Natural killer cell (primary cell): ENCODE measurements at regions of chr14 and their contacts with region 1.

Region 1: DNA sequence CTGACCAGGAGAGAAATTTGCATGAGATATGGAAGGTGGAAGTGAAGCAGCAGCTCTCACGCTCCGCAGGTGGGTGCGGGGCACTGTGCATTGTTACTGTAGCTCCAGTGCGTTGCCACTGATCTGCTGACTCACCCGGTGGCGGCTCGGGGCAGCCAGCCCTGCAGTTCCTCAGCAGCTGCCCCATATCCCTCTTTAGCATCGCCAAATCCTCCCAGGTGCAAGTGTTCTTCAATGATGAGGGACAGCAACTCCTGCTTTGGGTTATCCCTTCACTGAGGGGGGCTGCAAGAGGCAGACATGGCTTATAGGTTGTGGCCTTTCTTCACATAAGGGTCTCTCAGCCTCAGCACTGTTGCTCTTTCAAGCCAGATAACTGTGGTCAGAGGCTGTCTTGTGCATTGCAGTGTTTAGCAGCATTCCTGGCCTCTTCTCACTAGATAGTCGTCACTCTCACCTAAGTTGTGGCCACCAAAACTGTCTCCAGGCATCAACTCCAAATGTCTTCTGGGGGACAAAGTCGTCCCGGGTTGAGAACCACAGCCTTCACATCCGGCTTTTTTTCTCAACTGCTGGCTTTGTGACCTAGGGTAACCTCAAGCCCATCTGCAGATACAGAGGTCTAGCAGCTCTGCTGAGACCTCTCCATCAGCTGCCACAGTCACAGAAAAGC is 180.8 kb downstream of the EFCAB11 start:
- DNase-seq: peak; percentile 59 to 82
- ATAC-seq: peak; percentile 83 to 93 (median 89)
- H3K4me3 ChIP-seq: no peak overlapping the region
- H3K4me3 Mint-ChIP-seq: peak overlapping the region; percentile 74
- H3K27ac ChIP-seq: peak overlapping the region; percentile 28
- H3K27ac Mint-ChIP-seq: peak overlapping the region; percentile 76 to 83
- H3K4me1 ChIP-seq: peaks cover 27% of the 10 kb centered on the region
- H3K4me1 Mint-ChIP-seq: peaks cover 16 to 17% of the 10 kb centered on the region in 2 donors
- H3K27me3 ChIP-seq: no peaks in the 10 kb centered on the region
- H3K27me3 Mint-ChIP-seq: peaks cover 0 to 7% of the 10 kb centered on the region in 2 donors
- CTCF ChIP-seq: no peak

Region 2: GRCh38 chr14:89509891-89510290 is 263.9 kb before region 1 on chr14:
- intact Hi-C with region 1: loop called (anchors 5 kb)
- DNase-seq: no peak
- ATAC-seq: no peak
- H3K4me3 ChIP-seq: no peak overlapping the region
- H3K4me3 Mint-ChIP-seq: peak overlapping the region; percentile 76
- H3K27ac ChIP-seq: peak overlapping the region; percentile 49
- H3K27ac Mint-ChIP-seq: peak overlapping the region; percentile 97
- H3K4me1 ChIP-seq: peaks cover 38% of the 10 kb centered on the region
- H3K4me1 Mint-ChIP-seq: peaks cover 61 to 65% of the 10 kb centered on the region in 2 donors
- H3K27me3 ChIP-seq: no peaks in the 10 kb centered on the region
- H3K27me3 Mint-ChIP-seq: no peaks in the 10 kb centered on the region
- CTCF ChIP-seq: no peak

Region 3: GRCh38 chr14:89681086-89682018 is 92.4 kb before region 1 on chr14:
- intact Hi-C with region 1: no loop called
- DNase-seq: peak in 1 of 2 donors; percentile 65
- ATAC-seq: peak; percentile 37 to 48 (median 46)
- H3K4me3 ChIP-seq: no peak overlapping the region
- H3K4me3 Mint-ChIP-seq: peak overlapping the region; percentile 85
- H3K27ac ChIP-seq: peak overlapping the region; percentile 23
- H3K27ac Mint-ChIP-seq: peak overlapping the region; percentile 82 to 87
- H3K4me1 ChIP-seq: peaks cover 20% of the 10 kb centered on the region
- H3K4me1 Mint-ChIP-seq: peaks cover 23 to 31% of the 10 kb centered on the region in 2 donors
- H3K27me3 ChIP-seq: no peaks in the 10 kb centered on the region
- H3K27me3 Mint-ChIP-seq: no peaks in the 10 kb centered on the region
- CTCF ChIP-seq: no peak

Region 4: GRCh38 chr14:89701211-89702043 is 72.4 kb before region 1 on chr14:
- intact Hi-C with region 1: no loop called
- DNase-seq: peak; percentile 74 to 89
- ATAC-seq: peak; percentile 90 to 93 (median 92)
- H3K4me3 ChIP-seq: peak overlapping the region; percentile 45
- H3K4me3 Mint-ChIP-seq: peak overlapping the region; percentile 86
- H3K27ac ChIP-seq: peak overlapping the region; percentile 40
- H3K27ac Mint-ChIP-seq: peak overlapping the region; percentile 77 to 86
- H3K4me1 ChIP-seq: peaks cover 19% of the 10 kb centered on the region
- H3K4me1 Mint-ChIP-seq: peaks cover 35 to 40% of the 10 kb centered on the region in 2 donors
- H3K27me3 ChIP-seq: no peaks in the 10 kb centered on the region
- H3K27me3 Mint-ChIP-seq: no peaks in the 10 kb centered on the region
- CTCF ChIP-seq: no peak